ENCODE measurements at regions of chr2 and their contacts with region 1.

Region 1: GRCh38 chr2:64203858-64204632 is 59.8 kb upstream of the PELI1 start:
- DNase-seq: peak; percentile 75
- H3K4me3 Mint-ChIP-seq: peak overlapping the region; percentile 65
- H3K27ac Mint-ChIP-seq: peak overlapping the region; percentile 90
- H3K4me1 Mint-ChIP-seq: peaks cover 84% of the 10 kb centered on the region
- H3K27me3 Mint-ChIP-seq: no peaks in the 10 kb centered on the region

Region 2: GRCh38 chr2:64101141-64101591 is 102.9 kb before region 1 on chr2:
- CTCF ChIA-PET with region 1: no interaction called
- intact Hi-C with region 1: loop called (anchors 1 kb)
- DNase-seq: no peak
- H3K4me3 Mint-ChIP-seq: no peak overlapping the region
- H3K27ac Mint-ChIP-seq: peak overlapping the region; percentile 76
- H3K4me1 Mint-ChIP-seq: peaks cover 51% of the 10 kb centered on the region
- H3K27me3 Mint-ChIP-seq: no peaks in the 10 kb centered on the region

Region 3: GRCh38 chr2:64114063-64114911 is 89.8 kb before region 1 on chr2:
- CTCF ChIA-PET with region 1: no interaction called
- intact Hi-C with region 1: loop called (anchors 1 kb)
- DNase-seq: no peak
- H3K4me3 Mint-ChIP-seq: no peak overlapping the region
- H3K27ac Mint-ChIP-seq: peak overlapping the region; percentile 1
- H3K4me1 Mint-ChIP-seq: peaks cover 80% of the 10 kb centered on the region
- H3K27me3 Mint-ChIP-seq: no peaks in the 10 kb centered on the region

Region 4: GRCh38 chr2:64222351-64222750 is 18.3 kb after region 1 on chr2:
- CTCF ChIA-PET with region 1: interaction called, 3 read pairs
- intact Hi-C with region 1: loop called (anchors 1 kb)
- DNase-seq: no peak
- H3K4me3 Mint-ChIP-seq: no peak overlapping the region
- H3K27ac Mint-ChIP-seq: no peak overlapping the region
- H3K4me1 Mint-ChIP-seq: peaks cover 51% of the 10 kb centered on the region
- H3K27me3 Mint-ChIP-seq: no peaks in the 10 kb centered on the region

Region 5: GRCh38 chr2:64819774-64820696 is 616.0 kb after region 1 on chr2:
- CTCF ChIA-PET with region 1: no interaction called
- intact Hi-C with region 1: loop called (anchors 10 kb)
- DNase-seq: peak; percentile 72
- H3K4me3 Mint-ChIP-seq: peak overlapping the region; percentile 39
- H3K27ac Mint-ChIP-seq: peak overlapping the region; percentile 85
- H3K4me1 Mint-ChIP-seq: peaks cover 19% of the 10 kb centered on the region
- H3K27me3 Mint-ChIP-seq: no peaks in the 10 kb centered on the region